ENCODE measurements at regions of chr10 and their contacts with region 1.

Region 1: DNA sequence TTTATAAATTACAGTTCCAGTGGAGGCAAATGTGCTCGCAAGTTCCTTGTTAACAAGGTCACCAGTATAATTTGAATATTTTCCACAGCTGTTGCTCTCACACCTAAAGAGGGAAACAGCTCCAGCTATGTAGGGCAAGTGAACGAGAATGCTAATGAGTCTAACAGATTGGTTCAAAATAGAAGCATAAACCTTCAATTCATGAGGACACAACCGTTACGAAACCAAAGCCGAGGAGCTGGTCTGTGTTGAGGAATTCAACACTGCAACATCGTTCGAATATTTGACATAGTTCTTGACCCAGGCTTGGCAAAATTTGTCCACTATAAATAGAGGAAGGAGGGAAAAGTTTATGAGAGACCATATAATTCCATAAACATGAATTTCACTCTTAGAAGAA is 161.3 kb downstream of the KLF6 start:
- DNase-seq: no peak
- ATAC-seq: no peak
- H3K4me3 ChIP-seq: no peak overlapping the region
- H3K4me3 Mint-ChIP-seq: peak overlapping the region in 1 of 3 donors; percentile 17
- H3K27ac ChIP-seq: no peak overlapping the region
- H3K27ac Mint-ChIP-seq: no peak overlapping the region
- H3K4me1 ChIP-seq: peaks cover 0 to 4% of the 10 kb centered on the region in 2 experiments
- H3K4me1 Mint-ChIP-seq: peaks cover 7 to 22% (median 16%) of the 10 kb centered on the region in 3 donors
- H3K27me3 ChIP-seq: no peaks in the 10 kb centered on the region
- H3K27me3 Mint-ChIP-seq: peaks cover 0 to 9% of the 10 kb centered on the region in 2 donors

Region 2: GRCh38 chr10:2584385-2584784 is 1039.4 kb before region 1 on chr10:
- CTCF ChIA-PET with region 1: no interaction called
- POLR2A ChIA-PET with region 1: no interaction called
- DNase-seq: no peak
- ATAC-seq: no peak
- H3K4me3 ChIP-seq: no peak overlapping the region
- H3K4me3 Mint-ChIP-seq: no peak overlapping the region
- H3K27ac ChIP-seq: no peak overlapping the region
- H3K27ac Mint-ChIP-seq: no peak overlapping the region
- H3K4me1 ChIP-seq: no peaks in the 10 kb centered on the region
- H3K4me1 Mint-ChIP-seq: no peaks in the 10 kb centered on the region
- H3K27me3 ChIP-seq: no peaks in the 10 kb centered on the region
- H3K27me3 Mint-ChIP-seq: peaks cover 5 to 8% of the 10 kb centered on the region in 2 donors

Region 3: GRCh38 chr10:3573498-3573897 is 50.2 kb before region 1 on chr10:
- CTCF ChIA-PET with region 1: no interaction called
- POLR2A ChIA-PET with region 1: no interaction called
- DNase-seq: no peak
- ATAC-seq: no peak
- H3K4me3 ChIP-seq: no peak overlapping the region
- H3K4me3 Mint-ChIP-seq: no peak overlapping the region
- H3K27ac ChIP-seq: no peak overlapping the region
- H3K27ac Mint-ChIP-seq: no peak overlapping the region
- H3K4me1 ChIP-seq: no peaks in the 10 kb centered on the region
- H3K4me1 Mint-ChIP-seq: peaks cover 0 to 2% (median 0%) of the 10 kb centered on the region in 3 donors
- H3K27me3 ChIP-seq: no peaks in the 10 kb centered on the region
- H3K27me3 Mint-ChIP-seq: peaks cover 0 to 10% of the 10 kb centered on the region in 2 donors

Region 4: GRCh38 chr10:4278186-4278585 is 654.4 kb after region 1 on chr10:
- CTCF ChIA-PET with region 1: no interaction called
- POLR2A ChIA-PET with region 1: interaction called in 1 of 2 experiments, 12 read pairs
- DNase-seq: no peak
- ATAC-seq: no peak
- H3K4me3 ChIP-seq: no peak overlapping the region
- H3K4me3 Mint-ChIP-seq: no peak overlapping the region
- H3K27ac ChIP-seq: no peak overlapping the region
- H3K27ac Mint-ChIP-seq: no peak overlapping the region
- H3K4me1 ChIP-seq: no peaks in the 10 kb centered on the region
- H3K4me1 Mint-ChIP-seq: no peaks in the 10 kb centered on the region
- H3K27me3 ChIP-seq: peaks cover 0 to 3% of the 10 kb centered on the region in 2 experiments
- H3K27me3 Mint-ChIP-seq: peaks cover 3% of the 10 kb centered on the region in 2 donors